ENCODE measurements at regions of chr3 and their contacts with region 1.

Region 1: GRCh38 chr3:46860017-46860830 is 3.0 kb downstream of the MYL3 start:
- DNase-seq: no peak
- H3K4me3 ChIP-seq: no peak overlapping the region
- H3K27ac ChIP-seq: no peak overlapping the region
- H3K4me1 ChIP-seq: peaks cover 0 to 5% (median 1%) of the 10 kb centered on the region in 4 donors
- H3K27me3 ChIP-seq: peaks cover 0 to 6% (median 0%) of the 10 kb centered on the region in 4 donors
- CTCF ChIP-seq: peak in 1 of 3 experiments; percentile 22
- EP300 ChIP-seq: no peak
- POLR2A ChIP-seq: no peak

Region 2: DNA sequence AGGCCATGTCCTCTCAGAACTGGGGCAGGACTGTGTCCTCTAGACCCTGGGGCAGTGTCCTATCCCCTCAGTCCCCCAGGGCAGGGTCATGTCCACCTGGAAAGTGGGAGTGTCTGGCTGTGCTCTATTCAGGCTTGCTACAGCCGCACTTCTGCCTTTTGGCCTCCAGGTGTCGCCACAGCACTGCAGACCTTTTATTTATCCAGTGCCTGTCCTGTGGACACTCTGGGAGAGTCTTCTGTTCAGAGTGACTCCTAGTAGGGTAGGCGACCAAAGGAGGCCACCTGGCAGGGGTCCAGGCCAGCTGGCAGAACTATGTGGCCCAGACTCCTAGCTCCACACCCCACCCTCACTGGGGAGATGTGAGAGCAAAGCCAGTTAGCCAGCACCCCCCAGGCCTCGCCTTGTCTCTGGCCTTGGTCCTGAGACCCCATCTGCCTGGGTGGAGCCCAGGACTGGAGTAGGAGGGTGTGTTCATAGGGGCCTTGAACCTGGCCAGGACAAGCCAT is 155.1 kb before region 1 on chr3:
- intact Hi-C with region 1: loop called (anchors 5 kb)
- DNase-seq: no peak
- H3K4me3 ChIP-seq: no peak overlapping the region
- H3K27ac ChIP-seq: no peak overlapping the region
- H3K4me1 ChIP-seq: peaks cover 17 to 27% (median 22%) of the 10 kb centered on the region in 4 donors
- H3K27me3 ChIP-seq: peaks cover 0 to 7% (median 0%) of the 10 kb centered on the region in 4 donors
- CTCF ChIP-seq: peak; percentile 91 to 99 (median 97)
- EP300 ChIP-seq: no peak
- POLR2A ChIP-seq: no peak

Region 3: DNA sequence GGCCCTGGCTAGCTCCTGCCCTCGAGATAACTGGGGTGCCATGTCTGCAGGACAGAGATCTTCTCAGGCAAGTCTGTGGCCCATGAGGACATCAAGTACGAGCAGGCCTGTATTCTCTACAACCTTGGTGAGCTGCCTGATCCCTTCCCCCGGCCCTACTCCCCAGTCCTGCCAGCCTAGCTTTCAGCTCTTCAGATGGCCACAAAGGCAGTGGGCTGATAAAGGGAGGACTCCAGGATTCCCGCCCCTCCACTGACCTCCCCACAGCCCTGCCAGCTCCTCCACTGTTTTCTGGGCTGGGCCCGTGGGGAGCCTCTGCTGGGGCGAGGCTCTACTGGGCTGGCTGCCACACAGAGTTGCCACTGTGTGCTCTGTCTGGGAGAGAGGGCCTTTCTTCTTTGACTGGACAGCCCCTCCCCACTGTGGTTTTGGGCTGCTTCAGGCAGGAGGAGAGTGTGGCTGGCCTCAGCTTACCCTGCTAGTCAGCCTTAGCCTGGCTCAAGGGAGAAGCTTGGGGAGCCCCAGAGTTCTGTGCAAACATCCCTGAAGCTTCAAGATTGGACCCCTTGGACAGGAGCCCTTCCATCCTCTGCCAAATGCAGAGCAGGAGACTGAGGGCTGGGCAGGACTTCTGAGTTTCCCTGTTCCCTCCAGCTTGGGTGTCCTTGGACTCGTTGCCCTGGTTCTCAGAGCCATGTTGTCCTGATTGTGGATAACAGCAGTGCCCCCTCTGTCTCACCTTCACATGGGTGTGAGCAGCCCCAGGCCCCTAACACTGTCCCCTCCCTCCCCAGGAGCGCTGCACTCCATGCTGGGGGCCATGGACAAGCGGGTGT is 544.9 kb after region 1 on chr3:
- intact Hi-C with region 1: no loop called
- DNase-seq: no peak
- H3K4me3 ChIP-seq: no peak overlapping the region
- H3K27ac ChIP-seq: peak overlapping the region; percentile 70 to 76 (median 71)
- H3K4me1 ChIP-seq: peaks cover 18 to 33% (median 27%) of the 10 kb centered on the region in 4 donors
- H3K27me3 ChIP-seq: no peaks in the 10 kb centered on the region
- CTCF ChIP-seq: no peak
- EP300 ChIP-seq: no peak
- POLR2A ChIP-seq: no peak

Measured in esophagus muscularis mucosa (tissue), 4 donors.